ENCODE measurements at regions of chr17 and their contacts with region 1.

Region 1: GRCh38 chr17:57130761-57131461 is 45.9 kb downstream of the AKAP1 start:
- DNase-seq: peak; percentile 73
- H3K4me3 Mint-ChIP-seq: no peak overlapping the region
- H3K27ac Mint-ChIP-seq: no peak overlapping the region
- H3K4me1 Mint-ChIP-seq: no peaks in the 10 kb centered on the region
- H3K27me3 Mint-ChIP-seq: peaks cover 9% of the 10 kb centered on the region
- CTCF ChIP-seq: peak; percentile 66

Region 2: GRCh38 chr17:57226793-57227192 is 95.9 kb after region 1 on chr17:
- CTCF ChIA-PET with region 1: no interaction called
- intact Hi-C with region 1: no loop called
- DNase-seq: no peak
- H3K4me3 Mint-ChIP-seq: no peak overlapping the region
- H3K27ac Mint-ChIP-seq: no peak overlapping the region
- H3K4me1 Mint-ChIP-seq: no peaks in the 10 kb centered on the region
- H3K27me3 Mint-ChIP-seq: peaks cover 20% of the 10 kb centered on the region
- CTCF ChIP-seq: no peak

Region 3: DNA sequence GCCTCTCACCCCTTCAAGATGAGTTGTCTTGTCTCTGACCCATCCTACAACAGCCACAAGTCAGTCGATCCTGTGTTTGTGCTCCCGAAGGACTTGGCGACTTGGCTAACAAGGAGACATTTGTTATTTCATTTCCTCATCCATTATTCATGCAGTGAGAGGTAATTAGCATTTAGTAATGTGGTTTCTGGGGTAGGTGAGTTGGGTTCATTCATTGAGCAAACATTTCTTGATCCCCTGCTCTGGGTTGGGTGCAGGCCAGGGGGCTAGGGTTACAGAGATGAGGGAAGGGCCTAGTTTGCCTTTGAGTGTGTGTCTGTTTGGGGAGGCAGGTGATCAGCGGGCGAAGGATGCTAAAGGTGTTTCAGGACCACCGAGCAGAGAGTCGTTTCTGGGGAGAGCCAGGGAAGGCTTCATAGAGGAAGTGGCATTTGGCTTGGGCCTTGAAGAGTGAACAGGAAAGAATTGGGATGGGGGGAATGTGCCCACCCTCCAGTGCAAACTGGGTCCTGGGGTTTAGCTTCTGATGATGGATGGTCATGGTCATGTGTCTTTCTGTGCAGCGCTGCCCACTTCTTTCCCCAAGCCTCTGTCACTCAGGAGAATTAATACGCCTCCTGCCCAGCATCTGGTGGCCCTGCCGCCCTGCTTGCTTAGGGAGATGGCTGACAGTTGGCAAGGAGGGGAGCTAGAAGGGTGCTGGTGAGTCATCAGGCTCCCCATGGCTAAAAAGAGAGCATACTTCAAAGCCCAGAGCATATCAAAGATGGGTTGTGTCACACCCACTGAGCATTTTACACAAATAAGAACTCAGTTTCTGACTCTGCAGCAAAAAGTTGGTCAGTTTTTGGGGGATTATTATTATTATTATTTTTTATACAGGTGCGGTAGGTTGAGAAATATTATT is 164.0 kb after region 1 on chr17:
- CTCF ChIA-PET with region 1: no interaction called
- intact Hi-C with region 1: no loop called
- DNase-seq: no peak
- H3K4me3 Mint-ChIP-seq: no peak overlapping the region
- H3K27ac Mint-ChIP-seq: no peak overlapping the region
- H3K4me1 Mint-ChIP-seq: no peaks in the 10 kb centered on the region
- H3K27me3 Mint-ChIP-seq: no peaks in the 10 kb centered on the region
- CTCF ChIP-seq: no peak

Region 4: DNA sequence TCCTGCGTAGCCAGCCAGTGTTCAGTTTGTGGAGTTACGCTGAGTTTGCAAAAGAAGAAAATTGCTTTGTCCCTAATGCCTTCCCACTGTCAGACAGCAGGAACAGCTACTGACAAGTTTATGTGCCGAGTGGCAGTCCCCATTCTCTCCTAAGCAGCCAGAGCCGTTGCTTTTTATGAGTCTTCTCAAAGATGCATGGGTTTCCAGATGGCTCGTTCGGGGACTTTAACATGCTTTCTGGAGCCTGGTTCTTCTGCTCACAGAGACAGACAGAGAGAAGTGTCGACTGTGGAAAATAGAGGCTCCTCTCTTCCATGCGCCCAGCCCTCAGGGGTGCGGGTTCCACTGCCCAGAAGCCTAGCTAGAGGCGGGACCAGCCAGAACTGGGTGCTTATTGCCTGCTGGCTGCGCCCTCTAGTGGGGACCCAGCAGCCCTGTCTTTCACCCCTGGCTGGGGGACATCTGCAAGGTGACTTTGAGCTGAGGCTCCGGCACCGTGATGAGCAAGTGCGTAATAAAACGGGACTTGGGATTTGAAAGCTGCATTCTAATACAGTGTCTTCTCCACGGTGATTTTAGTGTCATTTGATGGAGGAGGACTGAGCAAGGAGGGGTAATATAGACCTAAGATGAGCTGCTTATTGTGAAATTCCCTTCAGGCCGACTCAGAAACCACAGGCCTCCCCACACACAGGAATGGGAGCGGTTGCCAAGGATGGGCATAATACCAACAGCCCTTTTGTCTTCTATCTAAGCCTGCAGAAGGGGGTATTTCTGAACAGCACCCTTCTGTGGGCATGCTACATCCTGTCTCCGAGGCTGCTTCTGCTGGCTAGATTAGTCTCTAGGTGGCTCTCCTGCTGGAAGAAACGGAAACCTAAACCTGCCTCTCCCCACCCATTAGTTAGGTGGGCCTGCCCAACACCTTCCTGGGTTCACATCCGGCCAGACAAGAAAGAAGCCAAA is 541.0 kb after region 1 on chr17:
- CTCF ChIA-PET with region 1: no interaction called
- intact Hi-C with region 1: loop called (anchors 5 kb)
- DNase-seq: peak; percentile 64
- H3K4me3 Mint-ChIP-seq: no peak overlapping the region
- H3K27ac Mint-ChIP-seq: no peak overlapping the region
- H3K4me1 Mint-ChIP-seq: no peaks in the 10 kb centered on the region
- H3K27me3 Mint-ChIP-seq: no peaks in the 10 kb centered on the region
- CTCF ChIP-seq: peak; percentile 73

Region 5: DNA sequence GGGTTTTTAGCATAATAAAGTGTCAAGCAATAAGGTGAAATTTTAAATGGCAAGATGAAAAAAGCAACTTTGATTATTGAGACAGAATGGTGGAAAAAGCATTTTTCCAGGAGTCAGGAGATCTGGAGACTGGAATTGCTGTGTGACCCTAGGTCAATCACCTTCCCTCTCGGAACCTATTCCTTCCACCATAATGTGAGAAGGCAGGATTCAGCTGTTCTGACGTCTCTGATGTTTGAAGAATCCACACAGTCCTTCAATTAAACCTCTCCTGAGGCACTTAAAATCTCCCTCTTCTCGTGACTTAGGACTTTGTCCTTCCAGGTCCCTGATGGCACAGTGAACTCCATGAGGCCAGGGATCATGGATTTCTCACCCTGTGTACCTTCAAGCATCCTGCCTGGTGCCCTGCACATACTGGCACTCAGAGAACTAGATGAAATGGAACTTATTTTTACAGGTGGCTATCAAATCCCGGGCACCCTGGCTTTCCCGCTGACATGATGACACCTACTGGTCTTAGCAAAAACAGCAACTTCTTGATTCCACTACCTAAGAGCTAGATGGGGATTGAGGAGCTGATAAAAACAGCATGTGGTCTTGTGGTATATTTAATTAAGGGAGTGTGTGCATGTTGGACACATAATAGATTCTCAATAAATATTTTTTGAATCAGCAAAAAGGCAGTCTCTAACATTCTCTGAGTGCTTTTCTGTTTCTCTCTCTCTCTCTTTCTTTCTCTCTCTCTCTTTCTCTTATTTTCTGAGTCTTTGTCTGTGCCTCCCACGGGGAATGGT is 616.5 kb after region 1 on chr17:
- CTCF ChIA-PET with region 1: interaction called, 4 read pairs
- intact Hi-C with region 1: loop called (anchors 2 kb)
- DNase-seq: peak; percentile 17
- H3K4me3 Mint-ChIP-seq: no peak overlapping the region
- H3K27ac Mint-ChIP-seq: no peak overlapping the region
- H3K4me1 Mint-ChIP-seq: no peaks in the 10 kb centered on the region
- H3K27me3 Mint-ChIP-seq: peaks cover 71% of the 10 kb centered on the region
- CTCF ChIP-seq: no peak

Region 6: DNA sequence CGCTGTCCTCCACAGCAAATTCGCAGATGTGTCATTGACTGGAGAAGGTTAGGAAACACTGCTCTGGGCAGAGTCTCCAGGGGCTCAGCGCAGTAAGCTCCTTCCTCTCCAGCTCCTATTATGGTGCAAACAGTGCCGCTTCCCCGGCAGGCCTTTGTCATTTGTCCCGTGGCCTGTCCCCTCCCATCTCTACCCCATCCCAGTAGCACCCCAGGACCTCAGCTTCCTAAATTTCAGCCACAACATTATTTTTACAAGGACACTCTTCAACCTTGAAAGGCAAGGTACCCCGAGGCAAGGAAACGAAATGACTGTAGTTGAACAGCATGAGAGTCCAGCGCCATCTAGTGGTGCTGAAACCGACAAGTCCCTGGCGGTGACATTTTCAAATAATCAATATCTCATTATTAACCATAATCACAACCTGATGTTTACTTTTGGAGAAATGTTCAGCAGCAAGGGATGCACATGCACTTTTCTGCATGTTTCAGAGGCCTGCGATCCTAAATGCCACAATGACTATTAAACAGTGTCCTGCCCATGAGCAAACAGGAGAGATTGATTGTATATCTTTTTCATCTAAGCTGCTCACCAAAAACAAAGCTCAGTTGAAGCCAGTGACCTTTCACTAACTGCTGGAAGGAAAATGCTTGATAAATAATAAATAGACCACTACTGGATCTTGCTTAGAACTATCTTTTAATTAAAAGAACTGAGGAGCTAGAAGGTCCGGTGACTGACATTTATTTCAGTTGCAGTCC is 702.4 kb after region 1 on chr17:
- CTCF ChIA-PET with region 1: interaction called, 9 read pairs
- intact Hi-C with region 1: loop called (anchors 5 kb)
- DNase-seq: peak; percentile 52
- H3K4me3 Mint-ChIP-seq: no peak overlapping the region
- H3K27ac Mint-ChIP-seq: no peak overlapping the region
- H3K4me1 Mint-ChIP-seq: no peaks in the 10 kb centered on the region
- H3K27me3 Mint-ChIP-seq: no peaks in the 10 kb centered on the region
- CTCF ChIP-seq: peak; percentile 72